ENCODE measurements at regions of chr12 and their contacts with region 1.

Region 1: DNA sequence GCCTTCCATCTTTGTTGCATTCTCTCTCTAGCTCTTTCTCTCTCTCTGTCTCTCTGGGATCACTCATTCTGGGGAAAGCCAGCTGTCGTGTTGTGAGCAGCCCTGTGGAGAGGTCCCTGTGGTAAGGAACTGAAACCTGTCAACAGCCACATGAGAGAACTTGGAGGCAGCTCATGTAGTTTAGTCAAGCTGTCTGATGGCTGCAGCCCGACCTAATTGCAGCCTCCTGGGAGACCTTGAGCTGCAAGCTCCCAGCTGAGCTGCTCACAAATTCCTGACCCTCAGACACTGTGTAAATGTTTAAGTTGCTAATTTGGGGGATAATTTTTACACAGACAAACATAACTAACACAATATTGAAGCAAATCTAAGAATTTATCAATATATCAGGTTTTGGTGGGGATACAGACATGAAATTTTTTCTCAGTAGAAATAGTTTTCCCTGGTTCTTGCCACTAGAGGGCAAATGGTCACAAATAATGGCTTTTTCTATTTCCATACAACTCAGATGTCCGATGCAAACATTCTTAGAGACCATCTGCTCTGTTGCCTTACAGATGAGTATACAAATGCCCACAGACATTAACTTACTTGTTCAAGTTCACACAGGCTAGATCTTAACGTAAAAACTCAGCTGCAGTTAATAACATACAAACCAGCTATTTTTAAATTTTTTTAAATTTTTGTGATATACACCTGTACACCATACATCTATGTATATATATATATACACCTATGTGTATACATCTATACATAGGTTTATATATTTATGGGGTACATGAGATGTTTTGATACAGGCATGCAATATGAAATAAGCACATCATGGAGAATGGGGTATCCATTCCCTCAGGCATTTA is 15.5 kb upstream of the KRR1 start:
- DNase-seq: peak; percentile 86
- H3K4me3 ChIP-seq: peak overlapping the region; percentile 17
- H3K27ac ChIP-seq: peak overlapping the region; percentile 20
- H3K4me1 ChIP-seq: peaks cover 30% of the 10 kb centered on the region
- CTCF ChIP-seq: peak; percentile 96

Region 2: DNA sequence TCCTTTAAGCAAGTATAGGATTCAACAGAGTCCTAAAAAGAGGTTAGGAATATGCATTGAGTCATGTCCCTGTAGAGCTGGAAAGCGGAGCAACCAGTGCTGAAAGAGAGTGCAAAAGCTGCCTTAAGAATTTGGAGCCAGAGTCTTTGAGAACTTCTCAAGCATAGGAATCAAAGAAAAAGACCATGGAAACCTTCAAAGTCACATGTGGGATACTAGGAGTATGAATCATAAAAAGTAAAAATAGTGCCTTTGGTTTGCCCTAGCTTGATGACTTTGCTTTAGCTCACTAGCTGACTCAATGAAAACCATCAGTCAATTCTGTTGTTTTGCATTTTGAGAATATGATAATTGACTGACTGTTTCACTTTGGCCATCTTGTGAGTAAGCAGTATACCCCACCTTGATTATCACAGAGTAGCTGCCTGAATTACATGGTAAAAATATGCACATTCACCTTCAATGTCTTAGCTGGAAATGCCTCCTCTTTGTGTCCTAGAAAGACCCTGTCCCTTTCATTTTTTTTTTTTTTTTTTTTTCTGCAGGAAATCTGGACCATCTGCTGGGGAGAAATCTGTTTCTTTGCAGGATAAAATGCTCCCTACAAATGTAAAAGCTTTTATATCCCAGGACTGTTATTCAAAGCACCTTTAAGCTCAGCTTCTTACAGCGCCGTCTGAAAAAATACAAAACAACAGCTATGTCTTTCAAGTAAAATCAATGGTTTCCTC is 233.1 kb after region 1 on chr12:
- CTCF ChIA-PET with region 1: no interaction called
- POLR2A ChIA-PET with region 1: interaction called, 3 read pairs
- intact Hi-C with region 1: loop called (anchors 5 kb)
- DNase-seq: no peak
- H3K4me3 ChIP-seq: peak overlapping the region; percentile 50
- H3K27ac ChIP-seq: peak overlapping the region; percentile 91
- H3K4me1 ChIP-seq: peaks cover 62% of the 10 kb centered on the region
- CTCF ChIP-seq: no peak

Region 3: GRCh38 chr12:75814851-75815754 is 288.2 kb after region 1 on chr12:
- CTCF ChIA-PET with region 1: no interaction called
- POLR2A ChIA-PET with region 1: interaction called, 3 read pairs
- intact Hi-C with region 1: loop called (anchors 5 kb)
- DNase-seq: peak; percentile 65
- H3K4me3 ChIP-seq: peak overlapping the region; percentile 9
- H3K27ac ChIP-seq: peak overlapping the region; percentile 51
- H3K4me1 ChIP-seq: peaks cover 19% of the 10 kb centered on the region
- CTCF ChIP-seq: no peak

Region 4: GRCh38 chr12:76037130-76038103 is 510.5 kb after region 1 on chr12:
- CTCF ChIA-PET with region 1: interaction called, 6 read pairs
- POLR2A ChIA-PET with region 1: interaction called, 4 read pairs
- intact Hi-C with region 1: loop called (anchors 1 kb)
- DNase-seq: peak; percentile 85
- H3K4me3 ChIP-seq: no peak overlapping the region
- H3K27ac ChIP-seq: no peak overlapping the region
- H3K4me1 ChIP-seq: peaks cover 2% of the 10 kb centered on the region
- CTCF ChIP-seq: peak; percentile 94

Region 5: DNA sequence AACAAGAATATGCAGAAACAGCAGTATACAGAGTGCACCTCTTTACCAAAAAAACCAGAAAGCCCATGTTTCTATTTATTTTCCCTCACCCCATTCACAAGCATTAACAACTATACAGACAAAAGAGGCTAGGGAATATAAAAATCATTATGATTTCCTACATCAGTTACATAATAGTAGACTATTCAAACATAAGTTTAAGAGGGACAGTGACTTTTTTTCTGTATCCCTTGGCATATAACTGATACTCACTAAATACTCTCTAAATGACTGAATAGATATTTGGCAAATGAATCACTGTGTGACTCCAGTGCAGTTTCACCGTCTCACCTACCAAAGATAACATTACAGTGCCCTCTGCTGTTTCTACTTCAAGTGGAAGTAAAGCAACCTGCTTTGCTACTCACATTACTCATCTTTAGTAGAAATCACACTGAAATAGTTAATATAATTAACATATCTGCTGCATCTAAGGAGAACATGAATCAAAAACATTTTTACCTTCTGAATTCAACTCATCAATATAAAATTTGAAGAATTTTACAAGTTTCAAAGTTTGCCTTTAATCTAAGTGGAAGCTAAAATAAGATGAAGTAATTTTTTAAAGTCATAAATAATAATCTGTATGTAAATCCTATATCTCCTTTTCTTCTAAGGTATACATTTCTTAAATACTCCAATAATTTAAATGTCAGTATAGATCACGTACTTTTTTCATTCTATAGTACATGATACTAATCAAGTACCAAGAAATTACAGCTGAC is 928.9 kb after region 1 on chr12:
- CTCF ChIA-PET with region 1: no interaction called
- POLR2A ChIA-PET with region 1: no interaction called
- intact Hi-C with region 1: loop called (anchors 10 kb)
- DNase-seq: peak; percentile 60
- H3K4me3 ChIP-seq: no peak overlapping the region
- H3K27ac ChIP-seq: no peak overlapping the region
- H3K4me1 ChIP-seq: peaks cover 7% of the 10 kb centered on the region
- CTCF ChIP-seq: peak; percentile 86

Region 6: DNA sequence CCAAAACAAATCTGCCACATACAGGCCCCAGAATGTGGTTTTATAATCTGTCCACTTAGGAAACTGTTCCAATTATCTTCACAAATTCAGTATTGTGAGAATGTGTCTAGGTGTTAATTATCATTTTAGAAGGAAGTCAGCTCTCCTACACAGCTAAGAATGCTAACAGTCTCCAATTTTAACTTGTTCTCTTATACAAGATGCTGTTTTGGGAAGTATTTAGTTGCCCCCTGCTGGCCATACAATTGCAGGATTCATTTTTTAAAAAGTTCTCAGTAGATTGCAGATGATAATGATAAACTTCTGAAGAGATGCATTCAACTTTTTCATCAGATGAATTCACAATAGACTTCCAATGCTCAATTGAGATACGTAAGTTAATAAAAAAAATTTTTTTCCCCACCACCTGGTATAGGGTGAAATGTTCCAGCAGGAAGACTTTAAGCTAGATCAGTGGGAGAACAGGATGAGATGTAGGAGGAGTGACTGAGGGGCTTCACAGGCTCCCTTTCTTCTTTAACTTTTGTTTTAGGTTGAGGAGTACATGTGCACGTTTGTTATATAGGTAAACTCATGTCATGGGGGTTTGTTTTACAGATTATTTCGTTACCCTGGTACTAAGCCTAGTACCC is 1060.0 kb after region 1 on chr12:
- CTCF ChIA-PET with region 1: no interaction called
- POLR2A ChIA-PET with region 1: interaction called, 3 read pairs
- intact Hi-C with region 1: loop called (anchors 10 kb)
- DNase-seq: peak; percentile 62
- H3K4me3 ChIP-seq: no peak overlapping the region
- H3K27ac ChIP-seq: no peak overlapping the region
- H3K4me1 ChIP-seq: no peaks in the 10 kb centered on the region
- CTCF ChIP-seq: peak; percentile 95

Measured in OCI-LY7 (cell line).